Ovary (tissue), 10 donors: ENCODE measurements at regions of chr5 and their contacts with region 1.

Region 1: GRCh38 chr5:74052441-74053221 is 426.6 kb downstream of the ARHGEF28 start:
- DNase-seq: no peak
- H3K4me3 ChIP-seq: no peak overlapping the region
- H3K27ac ChIP-seq: no peak overlapping the region
- H3K4me1 ChIP-seq: peaks cover 11% of the 10 kb centered on the region
- H3K27me3 ChIP-seq: no peaks in the 10 kb centered on the region
- CTCF ChIP-seq: no peak
- EP300 ChIP-seq: no peak
- POLR2A ChIP-seq: no peak

Region 2: GRCh38 chr5:74657165-74657564 is 604.5 kb after region 1 on chr5:
- intact Hi-C with region 1: loop called in 1 of 4 experiments (anchors 5 kb)
- DNase-seq: no peak
- H3K4me3 ChIP-seq: no peak overlapping the region
- H3K27ac ChIP-seq: no peak overlapping the region
- H3K4me1 ChIP-seq: no peaks in the 10 kb centered on the region
- H3K27me3 ChIP-seq: no peaks in the 10 kb centered on the region
- CTCF ChIP-seq: no peak
- EP300 ChIP-seq: no peak
- POLR2A ChIP-seq: no peak